ENCODE measurements at regions of chr15 and their contacts with region 1.

Region 1: GRCh38 chr15:60507596-60508424 is 28.9 kb upstream of the ICE2 start:
- DNase-seq: peak; percentile 62
- ATAC-seq: peak; percentile 68
- H3K4me3 Mint-ChIP-seq: no peak overlapping the region
- H3K27ac Mint-ChIP-seq: peak overlapping the region; percentile 34
- H3K4me1 Mint-ChIP-seq: peaks cover 52% of the 10 kb centered on the region
- H3K27me3 Mint-ChIP-seq: no peaks in the 10 kb centered on the region

Region 2: DNA sequence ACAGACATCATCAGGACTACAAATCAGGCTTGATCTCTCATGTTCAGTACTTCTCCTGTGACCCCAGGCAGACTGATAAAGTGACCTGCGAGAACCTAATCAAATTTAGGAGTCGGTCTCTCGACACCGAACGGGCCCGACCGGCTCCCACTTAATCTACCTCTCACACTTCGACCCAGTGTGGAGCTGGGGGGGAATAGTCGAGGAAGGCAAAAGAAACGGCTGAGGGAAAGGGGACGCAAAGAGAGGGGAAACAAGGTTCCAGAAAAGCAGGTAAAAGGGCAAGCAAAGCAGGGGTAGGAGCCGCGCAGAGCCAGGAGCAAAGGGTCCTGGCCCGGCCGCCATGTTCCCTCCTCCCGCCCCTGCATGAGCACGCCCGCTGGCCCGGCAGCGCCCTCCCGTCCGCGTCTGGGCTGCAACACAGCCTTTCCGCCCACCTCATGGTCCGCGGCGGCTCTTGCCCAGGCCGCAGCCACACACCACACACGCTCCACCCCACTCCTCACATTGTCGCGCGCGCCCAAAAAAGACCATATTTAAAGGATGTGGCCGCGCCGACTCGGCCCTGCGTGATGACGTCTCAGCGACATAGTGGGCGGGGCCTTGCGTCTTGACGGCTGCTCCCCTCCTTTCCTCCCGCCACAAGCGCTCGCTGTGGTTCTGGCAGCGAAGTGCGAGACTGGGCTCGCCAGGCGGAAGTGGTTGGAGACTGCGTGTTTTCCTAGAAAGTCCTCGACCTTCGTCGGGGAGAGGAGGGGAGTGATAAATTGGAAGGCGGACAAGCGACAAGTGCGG is 29.0 kb before region 1 on chr15 and contains the start of gene ICE2:
- CTCF ChIA-PET with region 1: interaction called, 5 read pairs
- POLR2A ChIA-PET with region 1: no interaction called
- intact Hi-C with region 1: loop called in 1 of 2 experiments (anchors 1 kb)
- DNase-seq: peak; percentile 98
- ATAC-seq: peak; percentile 93
- H3K4me3 Mint-ChIP-seq: peak within 1 kb of the TSS; percentile 91
- H3K27ac Mint-ChIP-seq: peak within 1 kb of the TSS; percentile 98
- H3K4me1 Mint-ChIP-seq: peaks cover 55% of the 10 kb centered on the region
- H3K27me3 Mint-ChIP-seq: no peaks in the 10 kb centered on the region
- total RNA-seq, gene ICE2: 72.8 to 81.6 TPM

Region 3: DNA sequence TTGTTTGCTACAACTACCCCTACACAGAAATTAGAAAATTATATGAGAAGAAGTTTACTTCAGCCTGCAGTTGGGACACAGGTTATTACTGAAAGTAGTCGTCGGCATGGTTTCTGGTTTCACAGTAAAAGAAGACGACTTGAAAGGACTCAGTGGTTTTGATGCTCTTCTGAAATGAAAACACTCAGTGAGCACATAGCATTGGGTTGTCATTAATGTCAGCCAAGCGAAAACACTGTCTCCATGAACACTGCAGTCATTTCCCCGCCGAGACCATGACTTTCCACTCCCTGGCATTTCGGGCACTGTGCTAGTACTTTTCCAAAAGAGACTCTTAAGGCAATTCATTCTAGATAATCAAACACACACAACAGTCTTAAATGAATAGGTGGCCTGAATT is 40.3 kb after region 1 on chr15:
- CTCF ChIA-PET with region 1: interaction called, 5 read pairs
- POLR2A ChIA-PET with region 1: no interaction called
- intact Hi-C with region 1: loop called (anchors 1 to 2 kb)
- DNase-seq: peak; percentile 84
- ATAC-seq: peak; percentile 83
- H3K4me3 Mint-ChIP-seq: peak overlapping the region; percentile 61
- H3K27ac Mint-ChIP-seq: peak overlapping the region; percentile 96
- H3K4me1 Mint-ChIP-seq: peaks cover 97% of the 10 kb centered on the region
- H3K27me3 Mint-ChIP-seq: no peaks in the 10 kb centered on the region

Region 4: GRCh38 chr15:60695713-60696522 is 188.1 kb after region 1 on chr15:
- CTCF ChIA-PET with region 1: no interaction called
- POLR2A ChIA-PET with region 1: no interaction called
- intact Hi-C with region 1: loop called in 1 of 2 experiments (anchors 10 kb)
- DNase-seq: peak; percentile 93
- ATAC-seq: peak; percentile 84
- H3K4me3 Mint-ChIP-seq: peak overlapping the region; percentile 58
- H3K27ac Mint-ChIP-seq: peak overlapping the region; percentile 81
- H3K4me1 Mint-ChIP-seq: peaks cover 74% of the 10 kb centered on the region
- H3K27me3 Mint-ChIP-seq: no peaks in the 10 kb centered on the region

Region 5: DNA sequence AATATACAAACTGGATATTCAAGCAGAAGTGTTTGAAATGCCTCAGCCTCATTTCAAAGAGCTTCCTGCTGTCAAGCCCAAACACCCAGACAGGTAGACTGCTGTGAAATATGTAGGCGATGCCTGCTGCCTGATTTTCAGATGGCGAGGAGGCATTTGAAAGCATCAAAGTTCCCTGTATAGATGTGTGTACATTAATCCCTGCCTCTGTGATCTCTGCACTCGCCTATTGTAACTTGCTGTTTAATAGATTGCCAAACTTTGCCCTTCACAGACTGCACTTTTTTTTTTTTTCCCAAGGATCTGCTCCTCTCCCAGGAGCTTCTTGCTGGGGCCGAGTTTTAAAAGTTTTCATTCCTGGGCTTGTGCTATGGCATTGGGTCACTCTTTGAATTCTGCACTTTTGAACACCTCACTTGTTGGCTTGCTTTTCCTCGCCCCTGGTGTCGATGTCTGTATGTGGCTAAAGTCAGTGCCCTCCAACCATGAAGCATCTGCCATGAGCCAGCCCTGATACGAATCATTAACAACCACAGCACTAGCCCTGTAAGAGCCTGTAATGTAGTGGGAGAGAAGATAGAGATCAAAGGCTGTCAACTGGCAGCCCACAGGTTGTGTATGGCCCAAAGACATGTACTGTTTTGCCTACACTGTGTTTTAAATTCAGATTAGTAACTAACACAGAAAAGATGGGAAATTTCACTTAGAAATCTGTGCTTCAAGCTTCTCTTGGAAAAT is 258.8 kb after region 1 on chr15:
- CTCF ChIA-PET with region 1: no interaction called
- POLR2A ChIA-PET with region 1: no interaction called
- intact Hi-C with region 1: no loop called
- DNase-seq: no peak
- ATAC-seq: peak; percentile 49
- H3K4me3 Mint-ChIP-seq: no peak overlapping the region
- H3K27ac Mint-ChIP-seq: no peak overlapping the region
- H3K4me1 Mint-ChIP-seq: peaks cover 33% of the 10 kb centered on the region
- H3K27me3 Mint-ChIP-seq: no peaks in the 10 kb centered on the region

Region 6: GRCh38 chr15:60865507-60865906 is 357.7 kb after region 1 on chr15:
- CTCF ChIA-PET with region 1: no interaction called
- POLR2A ChIA-PET with region 1: no interaction called
- intact Hi-C with region 1: no loop called
- DNase-seq: no peak
- ATAC-seq: peak; percentile 57
- H3K4me3 Mint-ChIP-seq: no peak overlapping the region
- H3K27ac Mint-ChIP-seq: no peak overlapping the region
- H3K4me1 Mint-ChIP-seq: peaks cover 14% of the 10 kb centered on the region
- H3K27me3 Mint-ChIP-seq: no peaks in the 10 kb centered on the region

Region 7: DNA sequence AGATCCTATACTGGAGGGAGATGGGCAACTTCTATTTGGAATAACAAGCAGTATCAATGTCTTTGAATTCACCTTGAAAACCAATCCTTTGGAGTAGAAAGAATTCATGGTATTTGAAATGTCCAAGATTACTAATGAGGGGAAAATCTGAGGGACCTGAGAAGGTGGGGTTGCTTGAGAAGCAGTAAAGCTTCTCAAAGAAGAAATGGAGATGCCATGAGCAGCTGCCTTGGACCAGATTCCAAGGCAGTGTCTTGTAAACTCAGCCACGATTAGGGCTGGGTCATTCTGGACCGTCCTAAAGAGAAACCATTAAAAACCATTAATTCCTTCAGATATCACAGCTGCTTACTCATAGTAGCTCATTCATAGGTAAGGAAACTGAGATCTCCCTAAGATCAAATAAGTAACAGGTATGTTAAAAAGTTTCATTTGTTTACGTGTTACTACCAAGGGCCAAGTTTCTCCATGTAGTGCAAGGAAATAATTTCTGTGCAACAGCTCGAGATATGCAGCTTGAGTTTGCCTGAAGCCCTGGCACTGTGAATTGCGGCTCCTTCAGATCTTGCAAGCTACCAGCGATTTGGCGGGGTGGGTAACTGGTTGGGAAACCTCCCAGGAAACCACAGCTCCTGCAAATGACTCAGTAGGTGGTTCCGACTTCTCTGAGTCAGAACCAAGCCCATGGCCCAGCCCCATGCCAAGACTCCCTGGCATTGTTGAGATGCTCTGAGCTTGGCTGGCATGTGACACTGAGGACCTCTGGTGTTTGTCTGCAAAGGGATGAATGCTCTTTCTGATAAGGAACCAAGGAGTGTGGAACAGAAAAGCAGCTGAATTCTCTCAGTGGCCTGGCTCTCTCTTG is 424.5 kb after region 1 on chr15:
- CTCF ChIA-PET with region 1: interaction called, 11 read pairs
- POLR2A ChIA-PET with region 1: no interaction called
- intact Hi-C with region 1: loop called (anchors 1 kb)
- DNase-seq: peak; percentile 79
- ATAC-seq: peak; percentile 95
- H3K4me3 Mint-ChIP-seq: no peak overlapping the region
- H3K27ac Mint-ChIP-seq: no peak overlapping the region
- H3K4me1 Mint-ChIP-seq: peaks cover 11% of the 10 kb centered on the region
- H3K27me3 Mint-ChIP-seq: peaks cover 6% of the 10 kb centered on the region

Measured in activated CD4-positive, alpha-beta T cell treated with anti-CD3 and anti-CD28 coated beads for 36 hours (primary cell).